Gastrocnemius medialis (tissue), 4 donors: ENCODE measurements at regions of chr9 and their contacts with region 1.

Region 1: DNA sequence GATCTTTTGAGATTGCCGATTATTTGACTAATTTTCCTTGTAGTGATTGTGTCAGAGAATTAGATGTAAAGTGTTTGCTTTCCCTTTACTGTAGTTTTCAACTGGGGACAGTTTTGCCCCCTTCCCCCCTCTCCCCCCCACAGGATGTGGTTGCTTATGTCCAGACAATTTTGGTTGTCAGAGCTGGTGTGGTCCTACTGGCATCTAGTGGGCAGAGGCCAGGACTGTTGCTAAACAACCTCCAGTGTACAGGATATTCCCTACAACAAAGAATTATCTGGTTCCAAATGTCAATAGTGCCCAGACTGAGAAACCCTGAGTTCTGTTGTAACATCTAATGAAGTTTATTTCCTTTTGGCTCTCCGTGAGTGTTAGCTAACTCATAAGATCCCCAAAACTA is 20.0 kb downstream of the TMEFF1 start:
- DNase-seq: no peak
- ATAC-seq: peak; percentile 62 to 71
- H3K4me3 ChIP-seq: no peak overlapping the region
- H3K27ac ChIP-seq: no peak overlapping the region
- H3K4me1 ChIP-seq: no peaks in the 10 kb centered on the region
- H3K27me3 ChIP-seq: no peaks in the 10 kb centered on the region
- CTCF ChIP-seq: peak in 3 of 5 experiments; percentile 22 to 48 (median 23)
- POLR2A ChIP-seq: no peak

Region 2: GRCh38 chr9:100443781-100444768 is 48.9 kb before region 1 on chr9:
- in situ Hi-C with region 1: no loop called
- intact Hi-C with region 1: loop called (anchors 2 kb)
- DNase-seq: no peak
- ATAC-seq: no peak
- H3K4me3 ChIP-seq: no peak overlapping the region
- H3K27ac ChIP-seq: no peak overlapping the region
- H3K4me1 ChIP-seq: peaks cover 15 to 19% of the 10 kb centered on the region in 2 donors
- H3K27me3 ChIP-seq: no peaks in the 10 kb centered on the region
- CTCF ChIP-seq: no peak
- POLR2A ChIP-seq: no peak